GM12878 (cell line): ENCODE measurements at regions of chr2 and their contacts with region 1.

Region 1: GRCh38 chr2:8761529-8762164 is 75.8 kb downstream of the KIDINS220 start:
- DNase-seq: peak; percentile 35
- ATAC-seq: peak; percentile 65
- H3K4me3 ChIP-seq: no peak overlapping the region
- H3K27ac ChIP-seq: no peak overlapping the region
- H3K4me1 ChIP-seq: no peaks in the 10 kb centered on the region
- H3K27me3 ChIP-seq: no peaks in the 10 kb centered on the region
- CTCF ChIP-seq: peak; percentile 49 to 65 (median 56)
- EP300 ChIP-seq: no peak
- POLR2A ChIP-seq: no peak
- RAD21 ChIP-seq: peak; percentile 67

Region 2: GRCh38 chr2:8693155-8693821 is 68.4 kb before region 1 on chr2:
- CTCF ChIA-PET with region 1: interaction called, 22 read pairs
- POLR2A ChIA-PET with region 1: no interaction called
- RAD21 ChIA-PET with region 1: interaction called, 14 read pairs
- SMC1A ChIA-PET with region 1: interaction called, 6 read pairs
- in situ Hi-C with region 1: no loop called
- intact Hi-C with region 1: loop called (anchors 2 kb)
- DNase-seq: no peak
- ATAC-seq: peak; percentile 91
- H3K4me3 ChIP-seq: peak overlapping the region; percentile 44; the same call in 1 of the 2 replicates
- H3K27ac ChIP-seq: no peak overlapping the region
- H3K4me1 ChIP-seq: no peaks in the 10 kb centered on the region; the same call in 1 of the 2 replicates
- H3K27me3 ChIP-seq: no peaks in the 10 kb centered on the region
- CTCF ChIP-seq: peak; percentile 55 to 76 (median 58)
- EP300 ChIP-seq: no peak
- POLR2A ChIP-seq: no peak
- RAD21 ChIP-seq: peak; percentile 40

Region 3: DNA sequence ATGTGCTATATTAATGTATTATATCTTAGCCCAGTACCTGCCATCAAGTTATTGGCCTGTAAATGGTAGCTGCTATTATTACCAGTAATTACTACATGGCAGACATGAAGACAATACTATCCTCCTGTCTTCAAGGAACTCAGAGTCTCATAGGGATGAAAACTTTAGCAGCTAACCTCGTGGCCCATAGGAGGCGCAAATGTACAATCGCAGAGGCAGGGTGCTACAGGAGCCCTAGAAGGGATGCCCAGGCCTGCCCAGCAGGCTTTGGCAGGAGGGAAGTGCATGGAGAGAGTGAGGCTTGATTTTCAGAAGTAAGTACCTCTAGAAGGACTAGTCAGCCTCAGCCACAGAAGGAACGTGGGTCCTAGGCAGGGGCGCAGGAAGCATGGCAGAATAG is 120.4 kb after region 1 on chr2:
- CTCF ChIA-PET with region 1: no interaction called
- POLR2A ChIA-PET with region 1: no interaction called
- RAD21 ChIA-PET with region 1: no interaction called
- SMC1A ChIA-PET with region 1: no interaction called
- in situ Hi-C with region 1: no loop called
- intact Hi-C with region 1: no loop called
- DNase-seq: no peak
- ATAC-seq: peak; percentile 40; the same call in 2 of the 3 replicates
- H3K4me3 ChIP-seq: no peak overlapping the region
- H3K27ac ChIP-seq: no peak overlapping the region
- H3K4me1 ChIP-seq: no peaks in the 10 kb centered on the region
- H3K27me3 ChIP-seq: no peaks in the 10 kb centered on the region
- CTCF ChIP-seq: peak in 2 of 3 experiments; percentile 20 to 32; a peak in 2 of 6 replicates
- EP300 ChIP-seq: no peak
- POLR2A ChIP-seq: no peak
- RAD21 ChIP-seq: no peak